ENCODE measurements at regions of chr4 and their contacts with region 1.

Region 1: DNA sequence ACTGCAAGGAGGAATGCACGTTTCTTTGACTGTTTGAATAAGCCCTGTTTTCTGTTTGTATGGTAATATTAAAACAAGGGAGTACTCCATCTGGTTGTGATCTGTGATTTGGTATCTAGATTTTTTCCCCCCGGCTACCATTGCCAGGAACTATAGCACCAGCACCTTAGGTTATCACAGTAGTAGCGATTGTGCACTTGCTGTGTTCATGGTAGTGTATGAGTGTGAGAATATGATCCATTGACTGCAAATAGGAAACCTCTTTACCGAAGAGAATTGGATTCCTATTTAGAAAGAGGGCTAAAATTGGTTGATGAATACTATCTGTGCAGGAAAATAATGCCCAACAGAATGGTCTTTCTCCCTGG is 69.9 kb downstream of the LARP7 start:
- DNase-seq: no peak
- H3K4me3 Mint-ChIP-seq: peak overlapping the region; percentile 81
- H3K27ac Mint-ChIP-seq: no peak overlapping the region
- H3K4me1 Mint-ChIP-seq: peaks cover 21% of the 10 kb centered on the region
- H3K27me3 Mint-ChIP-seq: peaks cover 31% of the 10 kb centered on the region

Region 2: DNA sequence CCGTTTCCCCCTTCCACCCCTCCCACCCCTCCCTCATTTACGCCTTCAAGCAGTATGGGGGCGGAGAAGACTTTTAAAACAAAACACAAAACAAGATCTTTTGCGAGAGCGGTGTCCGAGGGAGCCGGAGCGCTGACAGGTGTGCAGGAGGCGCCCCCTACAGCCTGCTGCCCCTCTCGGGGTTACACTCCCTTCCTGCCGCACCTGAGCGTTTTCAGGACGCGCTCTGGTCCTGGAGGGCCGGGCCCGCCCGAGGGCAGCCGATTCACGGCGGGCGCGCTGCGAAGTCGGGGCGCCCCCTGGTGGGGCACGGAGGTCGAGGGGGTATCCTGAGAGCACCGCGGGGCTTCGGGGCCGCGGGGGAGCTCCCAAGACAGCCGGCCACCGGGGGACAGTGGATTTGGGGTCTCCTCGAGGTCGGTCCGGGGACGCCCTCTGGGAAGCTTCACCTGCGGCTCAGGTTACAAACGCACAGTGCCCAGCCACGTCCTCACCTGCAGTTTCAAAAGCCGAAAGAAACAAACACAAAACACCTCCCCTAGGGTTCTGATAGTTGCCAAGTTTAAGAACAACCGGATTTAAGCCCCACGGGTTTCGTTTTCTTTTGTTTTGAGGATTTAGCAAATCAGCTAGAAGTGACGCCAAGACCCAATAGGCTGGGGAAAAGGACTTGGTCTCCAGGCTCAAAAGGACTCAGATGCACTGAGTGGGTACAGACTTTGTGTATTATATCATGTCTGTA is 182.9 kb before region 1 on chr4:
- CTCF ChIA-PET with region 1: no interaction called
- POLR2A ChIA-PET with region 1: no interaction called
- intact Hi-C with region 1: no loop called
- DNase-seq: peak; percentile 86
- H3K4me3 Mint-ChIP-seq: peak overlapping the region; percentile 72
- H3K27ac Mint-ChIP-seq: no peak overlapping the region
- H3K4me1 Mint-ChIP-seq: peaks cover 31% of the 10 kb centered on the region
- H3K27me3 Mint-ChIP-seq: peaks cover 51% of the 10 kb centered on the region

Region 3: DNA sequence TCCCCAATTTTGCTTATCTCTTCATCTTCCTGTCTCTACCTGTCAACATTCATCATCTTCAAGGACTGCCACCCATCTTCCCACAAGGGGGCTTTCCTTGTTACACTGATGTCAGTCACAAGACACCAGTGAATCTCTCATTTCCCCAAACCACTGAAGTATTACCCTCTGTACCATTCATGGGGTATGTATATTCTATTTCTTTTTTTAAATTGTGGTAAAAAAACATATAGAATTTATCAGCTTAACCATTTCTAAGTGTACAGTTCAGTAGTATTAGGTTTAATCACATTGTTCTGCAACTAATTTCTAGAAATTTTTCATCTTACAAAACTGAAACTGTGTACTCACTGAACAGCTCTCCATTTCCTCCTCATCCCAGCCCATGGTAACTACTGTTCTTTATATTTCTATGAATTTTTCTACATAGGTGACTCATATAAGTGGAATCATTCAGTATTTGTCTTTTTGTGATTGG is 28.7 kb after region 1 on chr4:
- CTCF ChIA-PET with region 1: no interaction called
- POLR2A ChIA-PET with region 1: no interaction called
- intact Hi-C with region 1: loop called (anchors 2 kb)
- DNase-seq: no peak
- H3K4me3 Mint-ChIP-seq: no peak overlapping the region
- H3K27ac Mint-ChIP-seq: no peak overlapping the region
- H3K4me1 Mint-ChIP-seq: peaks cover 16% of the 10 kb centered on the region
- H3K27me3 Mint-ChIP-seq: no peaks in the 10 kb centered on the region

Measured in activated CD4-positive, alpha-beta memory T cell treated with anti-CD3 and anti-CD28 coated beads for 36 hours (primary cell).